ENCODE measurements at regions of chr6 and their contacts with region 1.

Region 1: DNA sequence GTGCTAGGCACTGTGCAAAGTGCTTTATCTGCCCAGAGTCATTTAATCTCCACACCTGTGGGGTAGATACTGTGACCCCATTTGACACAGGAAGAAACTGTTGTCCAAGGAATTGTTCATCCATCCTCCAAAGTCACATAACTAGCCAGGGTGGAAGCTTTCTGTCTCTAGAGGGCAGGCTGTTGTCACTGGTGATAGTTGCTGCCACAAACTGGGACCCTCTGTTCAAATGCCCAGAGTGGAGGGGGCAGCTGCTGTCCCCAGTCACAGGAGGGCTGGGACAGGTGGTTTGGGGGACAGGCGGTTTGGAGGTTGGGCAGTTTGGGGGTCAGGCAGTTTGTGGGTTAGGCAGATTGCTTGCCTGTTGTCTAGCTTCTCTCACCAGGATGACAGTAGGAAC is 16.1 kb upstream of the TMEM242 start:
- DNase-seq: no peak
- H3K4me3 ChIP-seq: no peak overlapping the region
- H3K27ac ChIP-seq: no peak overlapping the region
- H3K4me1 ChIP-seq: no peaks in the 10 kb centered on the region
- H3K27me3 ChIP-seq: no peaks in the 10 kb centered on the region
- CTCF ChIP-seq: peak; percentile 15 to 48 (median 31)
- EP300 ChIP-seq: no peak
- POLR2A ChIP-seq: no peak
- RAD21 ChIP-seq: peak; percentile 60 to 69

Region 2: GRCh38 chr6:156791320-156791850 is 548.0 kb before region 1 on chr6:
- CTCF ChIA-PET with region 1: no interaction called
- POLR2A ChIA-PET with region 1: no interaction called
- DNase-seq: no peak
- H3K4me3 ChIP-seq: peak overlapping the region in 3 of 4 experiments; percentile 15 to 35 (median 24); a peak in 5 of 8 replicates
- H3K27ac ChIP-seq: no peak overlapping the region
- H3K4me1 ChIP-seq: peaks cover 8 to 45% (median 28%) of the 10 kb centered on the region in 4 experiments
- H3K27me3 ChIP-seq: no peaks in the 10 kb centered on the region
- CTCF ChIP-seq: no peak
- EP300 ChIP-seq: no peak
- POLR2A ChIP-seq: no peak
- RAD21 ChIP-seq: no peak

Region 3: DNA sequence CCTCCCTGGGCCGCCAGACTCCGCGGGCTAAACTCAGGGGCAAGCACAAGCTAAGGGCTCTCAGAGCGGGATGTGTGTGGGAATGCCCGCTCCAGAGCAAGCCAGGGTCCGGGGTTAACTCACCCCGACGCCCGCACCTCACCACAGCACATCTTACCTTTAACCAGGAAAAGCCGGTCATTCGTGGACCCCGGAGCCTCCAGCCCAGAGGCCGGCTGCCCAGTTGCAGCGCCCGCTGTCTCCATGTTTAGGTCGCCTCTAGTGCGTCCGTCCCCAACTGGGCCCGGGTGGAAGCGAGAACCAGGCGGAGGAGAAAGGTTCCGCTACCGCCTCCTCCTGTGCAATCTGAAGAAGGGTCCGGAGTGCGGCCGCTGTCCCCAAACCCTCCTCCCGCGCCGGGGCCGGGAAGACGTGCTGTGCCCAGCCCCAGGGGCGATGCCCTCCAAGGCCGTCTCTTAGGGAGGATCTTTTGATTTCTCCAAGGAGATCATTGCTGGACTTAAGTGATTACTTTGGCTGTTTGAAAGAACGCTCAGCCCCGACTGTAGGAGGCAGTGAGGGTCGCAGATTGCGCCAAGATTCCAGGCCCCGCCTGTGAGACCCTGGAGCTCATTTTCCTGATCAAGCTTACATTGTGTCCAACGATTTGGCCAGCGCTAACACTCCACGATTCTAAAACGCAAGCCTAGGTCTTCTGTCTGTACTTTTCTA is 16.0 kb before region 1 on chr6 and contains the start of gene TMEM242:
- CTCF ChIA-PET with region 1: interaction called, 73 read pairs
- POLR2A ChIA-PET with region 1: interaction called, 29 read pairs
- DNase-seq: peak in 1 of 2 experiments; percentile 98
- H3K4me3 ChIP-seq: peak within 1 kb of the TSS; percentile 87 to 99 (median 94)
- H3K27ac ChIP-seq: peak within 1 kb of the TSS; percentile 81
- H3K4me1 ChIP-seq: no peaks in the 10 kb centered on the region; a peak in 1 of 7 replicates
- H3K27me3 ChIP-seq: peaks cover 0 to 2% (median 0%) of the 10 kb centered on the region in 4 experiments; a peak in 2 of 7 replicates
- CTCF ChIP-seq: peak in 1 of 3 experiments; percentile 11; a peak in 2 of 4 replicates
- EP300 ChIP-seq: peak; percentile 13 to 75; a peak in 2 of 3 replicates
- POLR2A ChIP-seq: peak; percentile 90 to 98
- RAD21 ChIP-seq: no peak; a peak in 1 of 4 replicates
- total RNA-seq, gene TMEM242: 8.2 and 9.0 TPM in 2 replicates

Region 4: DNA sequence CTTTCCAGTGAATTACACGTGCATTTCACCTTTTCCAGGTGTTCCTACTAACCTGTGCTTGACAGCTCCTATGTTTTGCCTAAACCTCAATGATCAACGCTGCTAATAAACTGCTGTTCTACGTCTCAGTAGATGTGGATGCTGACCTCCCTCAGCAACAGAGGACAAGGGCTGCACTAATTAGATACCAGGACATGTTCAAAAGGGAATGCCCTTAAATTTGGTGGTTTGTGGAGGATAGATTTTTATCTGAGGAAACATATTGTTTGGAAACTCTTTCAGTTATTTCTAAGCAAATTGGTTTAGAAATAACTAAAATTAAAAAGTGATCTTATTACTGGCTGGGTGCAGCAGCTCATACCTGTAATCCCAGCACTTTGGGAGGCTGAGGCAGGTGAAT is 22.5 kb after region 1 on chr6:
- CTCF ChIA-PET with region 1: interaction called, 12 read pairs
- POLR2A ChIA-PET with region 1: no interaction called
- DNase-seq: no peak
- H3K4me3 ChIP-seq: no peak overlapping the region
- H3K27ac ChIP-seq: no peak overlapping the region
- H3K4me1 ChIP-seq: no peaks in the 10 kb centered on the region
- H3K27me3 ChIP-seq: no peaks in the 10 kb centered on the region
- CTCF ChIP-seq: no peak
- EP300 ChIP-seq: no peak
- POLR2A ChIP-seq: no peak
- RAD21 ChIP-seq: no peak